Cardiac septum (tissue), 1 donor: ENCODE measurements at regions of chr18 and their contacts with region 1.

Region 1: DNA sequence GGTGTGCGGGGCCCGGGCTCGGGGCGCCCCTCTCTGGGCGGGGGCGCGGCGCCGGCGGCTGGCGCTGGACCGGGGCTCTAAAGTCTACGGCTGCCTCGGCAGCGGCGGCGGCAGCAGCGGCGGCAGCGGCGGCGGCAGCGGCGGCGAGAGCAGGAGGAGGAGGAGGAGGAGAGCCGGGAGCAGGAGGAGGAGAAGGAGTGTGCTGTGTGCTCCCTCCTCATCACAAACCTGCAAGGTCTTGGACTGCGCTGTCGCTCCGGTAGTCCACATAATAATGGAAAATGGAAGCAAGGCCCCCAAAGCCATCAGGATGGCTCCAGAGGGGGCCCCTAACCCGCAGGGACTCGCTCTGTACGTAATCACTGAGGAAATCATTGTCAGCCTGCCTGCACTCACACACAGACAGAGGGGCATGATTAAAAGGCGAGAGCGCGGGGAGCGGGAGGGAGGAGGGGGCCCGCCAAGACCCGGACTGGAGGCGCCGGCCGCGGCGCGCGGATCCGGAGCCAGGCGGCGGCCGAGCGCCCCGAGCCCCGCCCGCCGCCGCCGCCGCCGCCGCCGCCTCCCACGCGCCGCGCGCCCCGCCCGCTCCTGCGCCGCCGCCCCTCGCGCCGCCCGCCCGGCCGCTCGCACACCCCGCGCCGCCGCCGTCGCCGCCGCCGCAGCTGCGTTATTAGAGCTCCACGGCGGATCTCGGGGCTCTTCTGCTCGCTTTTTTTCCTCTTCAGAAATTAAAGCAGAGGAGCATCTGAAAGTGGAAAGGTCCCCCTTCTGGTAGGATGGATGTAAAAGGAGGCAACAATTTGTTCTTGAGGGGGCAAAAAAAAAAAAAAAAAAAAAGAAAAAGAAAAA is at the start of gene ZNF521:
- DNase-seq: peak; percentile 87
- total RNA-seq, gene ZNF521: 15.4 TPM

Region 2: DNA sequence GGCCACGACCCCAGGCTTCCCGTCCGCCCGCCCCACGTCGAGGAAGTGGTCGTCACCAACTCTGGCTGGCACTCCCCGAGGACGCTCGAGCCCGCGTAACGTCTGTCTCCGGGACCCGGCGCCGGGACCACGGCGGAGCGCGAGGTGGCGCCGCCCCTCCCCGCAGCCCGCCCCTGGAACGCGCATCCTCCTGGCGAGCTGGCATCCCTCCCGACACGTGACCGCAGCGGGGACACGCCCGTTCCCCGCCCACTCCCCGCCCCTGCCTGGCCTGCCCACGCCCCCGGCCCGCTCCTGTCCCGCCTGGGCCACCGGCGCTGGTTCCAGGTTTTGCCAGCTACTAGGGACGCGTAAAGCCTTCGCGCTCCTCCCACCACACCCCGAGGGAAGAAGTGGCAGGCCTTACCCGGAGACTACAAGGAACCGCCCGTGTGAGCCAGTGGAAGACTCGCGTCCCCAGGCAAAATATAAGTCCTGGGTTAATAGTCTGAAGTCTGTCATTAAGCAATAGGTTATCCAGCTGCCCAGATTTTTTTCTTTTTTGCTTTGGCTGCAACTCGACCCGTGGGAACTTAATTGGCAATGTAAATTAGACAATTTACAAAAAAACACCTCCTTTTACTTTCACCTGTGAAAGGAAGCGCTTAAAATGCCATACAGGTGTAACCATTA is 954.2 kb before region 1 on chr18 and contains the start of gene OSBPL1A:
- intact Hi-C with region 1: loop called (anchors 5 kb)
- DNase-seq: peak; percentile 98
- total RNA-seq, gene OSBPL1A: 49.4 TPM

Region 3: GRCh38 chr18:24878289-24878688 is 473.7 kb before region 1 on chr18:
- intact Hi-C with region 1: loop called (anchors 5 kb)
- DNase-seq: no peak

Region 4: DNA sequence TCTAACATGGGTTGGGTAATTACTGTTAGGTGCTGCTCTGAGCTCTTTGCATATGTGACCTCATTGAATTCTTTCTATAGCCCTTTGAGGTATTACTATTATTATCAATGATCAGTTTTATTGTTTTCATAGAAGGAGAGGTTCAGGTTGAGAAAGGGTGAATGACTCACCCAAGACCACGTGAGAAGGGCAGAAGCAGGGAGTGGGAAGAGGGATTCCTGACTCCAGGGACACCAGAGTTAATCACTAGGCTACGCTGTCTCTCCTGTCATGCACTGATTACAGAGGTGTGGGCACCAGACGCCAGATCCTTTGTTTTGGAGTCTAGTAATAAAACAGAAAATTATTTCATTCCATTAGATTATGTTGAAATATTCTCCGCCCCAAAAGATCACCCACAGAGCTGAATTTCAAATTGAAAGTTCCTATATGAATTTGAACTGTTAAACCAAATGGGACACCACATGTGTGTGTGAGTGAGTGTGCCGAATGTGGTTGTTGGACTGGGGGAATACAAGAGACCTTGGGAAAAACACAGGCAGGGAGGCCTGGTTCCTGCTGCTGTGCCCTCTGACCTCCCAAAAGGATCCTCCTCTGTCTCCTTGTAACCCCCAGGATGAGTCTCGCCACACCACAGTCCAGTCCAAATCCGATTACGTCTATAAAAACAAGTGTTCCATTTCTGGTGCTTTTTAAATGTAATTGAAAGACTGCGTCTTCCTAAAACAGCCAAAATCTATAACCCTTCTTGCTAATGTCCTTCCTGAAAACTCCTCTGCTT is 215.4 kb before region 1 on chr18:
- intact Hi-C with region 1: loop called (anchors 10 kb)
- DNase-seq: no peak

Region 5: GRCh38 chr18:25164848-25165811 is 186.9 kb before region 1 on chr18:
- intact Hi-C with region 1: loop called (anchors 5 kb)
- DNase-seq: no peak

Region 6: GRCh38 chr18:25230658-25231326 is 121.2 kb before region 1 on chr18:
- intact Hi-C with region 1: loop called (anchors 2 kb)
- DNase-seq: peak; percentile 85

Region 7: GRCh38 chr18:25284861-25285550 is 67.0 kb before region 1 on chr18:
- intact Hi-C with region 1: loop called (anchors 2 kb)
- DNase-seq: no peak